CD8-positive, alpha-beta T cell (primary cell): ENCODE measurements at regions of chr1 and their contacts with region 1.

Region 1: GRCh38 chr1:2133039-2133878 is 61.3 kb downstream of the FAAP20 start:
- DNase-seq: peak; percentile 90 to 99 (median 97)
- ATAC-seq: peak; percentile 89
- H3K4me3 ChIP-seq: peak overlapping the region; percentile 51 to 61
- H3K4me3 Mint-ChIP-seq: peak overlapping the region; percentile 81
- H3K27ac ChIP-seq: peak overlapping the region; percentile 73 to 91
- H3K27ac Mint-ChIP-seq: peak overlapping the region; percentile 90
- H3K4me1 ChIP-seq: peaks cover 11% of the 10 kb centered on the region
- H3K4me1 Mint-ChIP-seq: peaks cover 31% of the 10 kb centered on the region
- H3K27me3 ChIP-seq: no peaks in the 10 kb centered on the region
- H3K27me3 Mint-ChIP-seq: no peaks in the 10 kb centered on the region
- CTCF ChIP-seq: no peak

Region 2: DNA sequence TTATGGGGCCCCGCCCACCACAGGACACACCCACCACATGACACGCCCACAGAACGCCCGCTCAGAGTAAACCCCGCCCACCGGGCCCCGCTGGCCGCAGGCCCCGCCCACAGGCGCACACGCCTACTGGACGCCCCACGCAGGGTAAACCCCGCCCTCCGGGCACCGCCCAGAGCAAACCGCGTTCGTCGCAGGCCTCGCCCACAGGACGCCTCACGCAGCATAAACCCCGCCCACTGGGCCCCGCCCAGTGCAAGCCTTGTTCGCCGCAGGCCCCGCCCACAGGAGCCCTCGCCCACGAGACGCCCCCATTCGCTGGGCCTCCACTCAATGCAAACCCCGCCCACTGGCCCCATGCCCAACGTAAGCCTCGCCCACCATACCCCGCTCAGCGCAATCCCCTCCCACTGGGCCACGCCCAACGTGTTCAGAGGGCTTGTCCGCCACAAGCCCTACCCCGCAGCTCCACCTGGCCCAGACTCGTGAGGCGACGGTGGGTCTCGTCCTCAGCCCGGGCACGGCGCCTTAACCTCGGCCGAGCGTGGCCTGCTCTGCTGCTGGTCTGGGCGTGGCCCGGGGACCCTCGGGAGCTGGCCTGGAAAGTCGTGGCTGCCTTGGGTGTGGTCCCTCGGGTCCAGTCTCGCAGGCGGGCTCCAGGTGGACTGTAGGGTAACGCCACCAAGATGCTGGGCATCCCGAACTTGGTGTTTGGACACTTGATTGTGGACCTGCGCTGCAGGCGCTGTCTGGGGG is 213.8 kb before region 1 on chr1:
- CTCF ChIA-PET with region 1: no interaction called
- POLR2A ChIA-PET with region 1: no interaction called
- intact Hi-C with region 1: loop called (anchors 1 kb)
- DNase-seq: peak; percentile 97 to 100 (median 99)
- ATAC-seq: peak; percentile 89
- H3K4me3 ChIP-seq: peak overlapping the region; percentile 39 to 74
- H3K4me3 Mint-ChIP-seq: peak overlapping the region; percentile 47
- H3K27ac ChIP-seq: peak overlapping the region in 1 of 2 experiments; percentile 28
- H3K27ac Mint-ChIP-seq: peak overlapping the region; percentile 5
- H3K4me1 ChIP-seq: peaks cover 17% of the 10 kb centered on the region
- H3K4me1 Mint-ChIP-seq: peaks cover 3% of the 10 kb centered on the region
- H3K27me3 ChIP-seq: no peaks in the 10 kb centered on the region
- H3K27me3 Mint-ChIP-seq: no peaks in the 10 kb centered on the region
- CTCF ChIP-seq: no peak

Region 3: DNA sequence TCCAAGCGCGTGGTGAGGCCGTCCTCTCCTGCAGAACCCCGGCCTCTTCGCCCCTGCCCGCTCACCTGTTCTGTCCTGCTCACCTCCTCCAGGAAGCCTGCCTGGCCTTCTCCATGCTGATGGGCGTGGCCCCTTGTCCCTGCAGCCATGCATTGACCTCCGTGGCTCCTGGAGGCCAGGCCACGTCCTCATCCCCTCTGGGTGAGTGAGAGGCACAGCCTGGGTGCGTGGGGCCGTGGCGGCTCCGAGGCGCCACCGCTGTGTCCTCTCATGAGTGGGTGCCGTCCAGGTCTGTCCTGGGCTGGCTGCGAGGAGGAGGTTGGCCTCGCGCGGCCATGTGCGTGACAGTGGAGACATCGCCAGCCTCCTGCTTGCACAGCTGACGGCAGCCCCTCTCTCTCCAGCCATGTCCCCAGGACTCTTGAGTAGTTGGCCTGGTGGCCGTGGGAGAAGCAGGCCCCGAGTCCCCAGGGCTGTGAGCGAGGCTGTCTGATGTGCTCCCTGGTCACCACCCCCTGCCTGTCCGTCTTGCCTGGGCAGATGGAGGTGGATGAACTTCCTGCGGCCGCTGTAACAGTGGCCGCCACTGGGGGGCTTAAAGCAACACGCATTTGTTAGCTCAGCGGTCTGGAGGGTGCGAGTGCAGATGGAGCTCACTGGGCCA is 24.9 kb before region 1 on chr1:
- CTCF ChIA-PET with region 1: no interaction called
- POLR2A ChIA-PET with region 1: no interaction called
- intact Hi-C with region 1: no loop called
- DNase-seq: no peak
- ATAC-seq: no peak
- H3K4me3 ChIP-seq: no peak overlapping the region
- H3K4me3 Mint-ChIP-seq: no peak overlapping the region
- H3K27ac ChIP-seq: no peak overlapping the region
- H3K27ac Mint-ChIP-seq: no peak overlapping the region
- H3K4me1 ChIP-seq: no peaks in the 10 kb centered on the region
- H3K4me1 Mint-ChIP-seq: no peaks in the 10 kb centered on the region
- H3K27me3 ChIP-seq: no peaks in the 10 kb centered on the region
- H3K27me3 Mint-ChIP-seq: no peaks in the 10 kb centered on the region
- CTCF ChIP-seq: no peak

Region 4: DNA sequence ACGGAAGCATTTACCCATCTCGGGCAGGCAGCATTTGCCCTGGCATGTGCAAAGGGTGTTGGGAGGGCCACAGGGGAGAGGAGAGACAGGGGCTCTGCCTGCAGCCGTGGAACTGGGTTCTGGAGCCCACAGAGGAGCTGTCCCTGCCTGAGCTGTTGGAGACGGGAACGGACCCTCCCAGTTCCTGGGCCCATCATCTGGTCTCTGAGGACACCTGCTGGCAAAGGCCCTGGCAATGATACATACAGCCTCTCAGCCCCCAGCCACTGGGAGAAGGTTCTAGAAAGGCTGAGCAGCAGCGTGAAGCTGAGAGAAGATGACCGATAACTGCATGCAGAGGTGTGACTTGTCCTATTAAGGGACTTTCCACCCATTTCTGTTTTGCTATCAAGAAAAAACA is 29.9 kb after region 1 on chr1:
- CTCF ChIA-PET with region 1: interaction called, 21 read pairs
- POLR2A ChIA-PET with region 1: no interaction called
- intact Hi-C with region 1: no loop called
- DNase-seq: peak in 3 of 9 experiments; percentile 41 to 51 (median 50)
- ATAC-seq: peak; percentile 59
- H3K4me3 ChIP-seq: no peak overlapping the region
- H3K4me3 Mint-ChIP-seq: no peak overlapping the region
- H3K27ac ChIP-seq: no peak overlapping the region
- H3K27ac Mint-ChIP-seq: peak overlapping the region; percentile 90
- H3K4me1 ChIP-seq: peaks cover 13% of the 10 kb centered on the region
- H3K4me1 Mint-ChIP-seq: peaks cover 17% of the 10 kb centered on the region
- H3K27me3 ChIP-seq: no peaks in the 10 kb centered on the region
- H3K27me3 Mint-ChIP-seq: no peaks in the 10 kb centered on the region
- CTCF ChIP-seq: no peak

Region 5: DNA sequence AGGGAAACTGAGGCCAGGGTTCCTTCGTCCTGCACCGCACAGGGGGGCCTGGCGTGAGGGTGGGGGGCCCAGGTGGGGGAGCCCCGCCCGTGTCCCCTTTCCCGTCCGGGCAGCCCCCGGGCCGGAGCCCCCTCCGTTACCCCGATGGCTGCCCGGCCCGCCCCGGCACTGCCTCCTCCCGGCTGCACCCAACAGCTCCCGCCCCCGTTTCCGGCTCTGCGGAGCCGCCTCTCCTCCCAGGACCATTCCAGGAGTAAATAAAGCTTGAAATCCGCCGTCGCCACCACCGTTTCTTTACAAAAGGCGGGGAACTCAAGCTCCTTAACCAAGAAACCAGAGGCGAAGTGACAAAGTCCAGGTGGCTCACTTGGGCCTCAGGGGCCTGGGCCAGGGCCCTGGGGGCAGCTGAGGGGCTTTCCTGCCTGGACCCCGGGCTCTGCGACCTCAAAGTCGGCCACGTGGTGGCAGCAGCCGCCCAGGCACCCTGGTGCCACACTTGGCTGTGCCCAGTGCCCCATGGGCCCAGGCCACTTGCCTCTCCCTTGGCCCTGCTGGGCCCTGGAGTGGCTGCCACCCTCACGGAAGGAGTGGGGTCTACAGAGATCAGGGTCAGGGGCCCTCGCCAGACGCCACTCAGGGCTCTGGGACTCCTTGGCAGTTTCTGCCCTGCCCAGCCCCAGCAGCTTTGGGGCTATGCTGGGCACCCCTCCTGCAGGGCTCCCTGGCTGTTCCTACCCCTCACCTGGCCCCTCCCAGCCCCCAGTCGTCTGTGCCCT is 61.8 kb after region 1 on chr1:
- CTCF ChIA-PET with region 1: interaction called, 5 read pairs
- POLR2A ChIA-PET with region 1: no interaction called
- intact Hi-C with region 1: loop called (anchors 1 to 2 kb)
- DNase-seq: peak; percentile 81 to 97 (median 88)
- ATAC-seq: peak; percentile 71
- H3K4me3 ChIP-seq: peak overlapping the region; percentile 64 to 66
- H3K4me3 Mint-ChIP-seq: peak overlapping the region; percentile 87
- H3K27ac ChIP-seq: peak overlapping the region; percentile 77 to 93
- H3K27ac Mint-ChIP-seq: peak overlapping the region; percentile 93
- H3K4me1 ChIP-seq: peaks cover 42% of the 10 kb centered on the region
- H3K4me1 Mint-ChIP-seq: peaks cover 34% of the 10 kb centered on the region
- H3K27me3 ChIP-seq: no peaks in the 10 kb centered on the region
- H3K27me3 Mint-ChIP-seq: no peaks in the 10 kb centered on the region
- CTCF ChIP-seq: peak; percentile 79

Region 6: DNA sequence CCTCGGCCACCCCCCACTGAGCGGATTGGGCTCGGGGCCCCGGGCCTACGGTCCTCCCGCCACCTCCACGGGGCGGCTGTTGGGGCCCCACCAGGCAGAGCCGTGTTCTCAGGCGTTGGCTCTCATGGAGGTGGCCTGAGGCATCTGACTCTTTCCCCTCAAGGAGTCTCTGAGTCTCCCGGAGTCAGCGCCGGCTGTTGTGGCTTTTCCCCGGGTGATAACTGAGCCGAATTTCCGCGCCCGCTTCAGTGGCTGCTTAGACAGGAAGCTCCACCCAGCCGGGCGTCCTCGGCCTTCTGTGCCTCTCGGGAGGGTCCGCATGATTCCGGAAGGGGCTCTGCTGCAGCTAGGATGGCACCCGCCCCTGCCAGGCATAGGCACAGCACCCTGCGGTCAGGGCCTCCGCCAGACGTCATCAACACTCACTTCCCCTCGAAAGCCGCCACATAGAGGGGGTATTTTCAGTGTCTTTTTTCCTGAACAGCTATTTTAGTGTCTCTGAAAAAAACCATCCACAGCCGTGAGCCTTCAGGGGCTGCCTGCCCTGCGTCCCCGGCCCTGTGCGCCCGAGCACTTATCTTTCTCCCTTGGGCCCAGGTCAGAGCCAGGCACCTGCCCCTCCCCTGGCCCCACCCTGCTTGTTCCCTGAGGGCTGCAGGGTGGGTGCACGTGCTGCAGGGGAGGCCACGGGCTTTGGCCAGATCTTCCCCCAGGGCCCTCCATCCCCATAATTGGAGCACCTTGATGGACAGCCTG is 167.8 kb after region 1 on chr1:
- CTCF ChIA-PET with region 1: no interaction called
- POLR2A ChIA-PET with region 1: no interaction called
- intact Hi-C with region 1: loop called in 1 of 2 experiments (anchors 1 kb)
- DNase-seq: peak; percentile 86 to 99 (median 94)
- ATAC-seq: peak; percentile 75
- H3K4me3 ChIP-seq: peak overlapping the region; percentile 62 to 65
- H3K4me3 Mint-ChIP-seq: peak overlapping the region; percentile 82
- H3K27ac ChIP-seq: peak overlapping the region; percentile 99 to 100
- H3K27ac Mint-ChIP-seq: peak overlapping the region; percentile 98
- H3K4me1 ChIP-seq: peaks cover 62% of the 10 kb centered on the region
- H3K4me1 Mint-ChIP-seq: peaks cover 57% of the 10 kb centered on the region
- H3K27me3 ChIP-seq: no peaks in the 10 kb centered on the region
- H3K27me3 Mint-ChIP-seq: no peaks in the 10 kb centered on the region
- CTCF ChIP-seq: no peak

Region 7: GRCh38 chr1:2545759-2546514 is 412.7 kb after region 1 on chr1:
- CTCF ChIA-PET with region 1: no interaction called
- POLR2A ChIA-PET with region 1: no interaction called
- intact Hi-C with region 1: loop called (anchors 1 to 10 kb)
- DNase-seq: peak; percentile 85 to 96 (median 89)
- ATAC-seq: peak; percentile 42
- H3K4me3 ChIP-seq: peak overlapping the region; percentile 87 to 91
- H3K4me3 Mint-ChIP-seq: peak overlapping the region; percentile 91
- H3K27ac ChIP-seq: peak overlapping the region; percentile 79 to 99
- H3K27ac Mint-ChIP-seq: peak overlapping the region; percentile 96
- H3K4me1 ChIP-seq: peaks cover 40% of the 10 kb centered on the region
- H3K4me1 Mint-ChIP-seq: peaks cover 31% of the 10 kb centered on the region
- H3K27me3 ChIP-seq: no peaks in the 10 kb centered on the region
- H3K27me3 Mint-ChIP-seq: no peaks in the 10 kb centered on the region
- CTCF ChIP-seq: no peak